Natural killer cell (primary cell): ENCODE measurements at regions of chr15 and their contacts with region 1.

Region 1: DNA sequence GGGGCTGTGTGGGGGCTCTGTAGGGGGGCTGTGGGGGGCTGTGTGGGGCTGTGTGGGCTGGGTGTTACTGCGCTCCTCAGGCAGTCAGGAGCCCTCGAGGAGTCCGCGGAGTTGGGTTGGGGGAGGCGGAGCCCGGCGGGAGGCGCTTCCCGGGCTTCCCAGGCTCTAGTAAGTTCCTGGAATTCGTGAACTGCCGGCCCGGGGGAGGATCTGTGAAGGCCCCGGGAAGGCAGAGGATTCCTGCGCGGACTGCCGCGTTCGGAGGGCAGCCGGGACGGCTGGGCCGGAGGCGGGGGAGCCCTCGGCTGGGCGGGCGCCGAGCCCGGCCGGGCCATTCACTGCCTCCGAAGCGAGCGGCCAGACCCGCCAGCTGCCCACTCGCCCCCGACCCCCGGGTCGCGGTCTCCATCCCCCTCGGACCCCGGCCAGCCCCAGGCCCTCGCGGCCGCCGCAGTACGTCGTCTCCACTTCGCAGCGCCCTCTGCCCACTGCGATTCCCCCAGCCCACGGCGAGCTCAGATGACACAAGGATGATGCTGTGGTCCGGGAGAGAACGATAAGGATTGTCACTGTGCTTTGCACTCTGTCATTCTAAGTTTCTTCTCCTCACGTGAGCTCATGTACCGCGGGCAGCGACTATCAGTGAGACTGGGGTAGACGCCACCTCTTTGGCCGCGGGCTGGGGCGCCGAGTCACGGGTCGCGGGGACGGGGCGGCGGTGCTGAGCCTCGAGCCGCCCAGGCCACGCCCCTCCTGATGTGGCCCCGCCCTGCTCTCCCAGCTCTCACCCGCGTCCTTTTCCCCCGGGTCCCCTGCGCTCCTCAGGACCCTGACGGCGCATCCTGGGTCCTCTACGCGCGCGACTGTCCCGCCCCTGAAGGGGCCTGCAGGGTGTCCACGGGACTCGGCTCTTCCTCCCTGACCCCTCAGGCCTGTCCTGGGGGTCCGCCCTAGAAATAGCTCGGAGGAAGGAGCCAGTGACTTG is 65.3 kb downstream of the KLF13 start:
- DNase-seq: peak; percentile 88 to 90
- ATAC-seq: peak; percentile 78 to 92 (median 84)
- H3K4me3 ChIP-seq: peak overlapping the region; percentile 93
- H3K4me3 Mint-ChIP-seq: peak overlapping the region; percentile 98
- H3K27ac ChIP-seq: peak overlapping the region; percentile 90
- H3K27ac Mint-ChIP-seq: peak overlapping the region; percentile 94
- H3K4me1 ChIP-seq: peaks cover 52% of the 10 kb centered on the region
- H3K4me1 Mint-ChIP-seq: peaks cover 57 to 79% of the 10 kb centered on the region in 2 donors
- H3K27me3 ChIP-seq: no peaks in the 10 kb centered on the region
- H3K27me3 Mint-ChIP-seq: no peaks in the 10 kb centered on the region
- CTCF ChIP-seq: no peak

Region 2: DNA sequence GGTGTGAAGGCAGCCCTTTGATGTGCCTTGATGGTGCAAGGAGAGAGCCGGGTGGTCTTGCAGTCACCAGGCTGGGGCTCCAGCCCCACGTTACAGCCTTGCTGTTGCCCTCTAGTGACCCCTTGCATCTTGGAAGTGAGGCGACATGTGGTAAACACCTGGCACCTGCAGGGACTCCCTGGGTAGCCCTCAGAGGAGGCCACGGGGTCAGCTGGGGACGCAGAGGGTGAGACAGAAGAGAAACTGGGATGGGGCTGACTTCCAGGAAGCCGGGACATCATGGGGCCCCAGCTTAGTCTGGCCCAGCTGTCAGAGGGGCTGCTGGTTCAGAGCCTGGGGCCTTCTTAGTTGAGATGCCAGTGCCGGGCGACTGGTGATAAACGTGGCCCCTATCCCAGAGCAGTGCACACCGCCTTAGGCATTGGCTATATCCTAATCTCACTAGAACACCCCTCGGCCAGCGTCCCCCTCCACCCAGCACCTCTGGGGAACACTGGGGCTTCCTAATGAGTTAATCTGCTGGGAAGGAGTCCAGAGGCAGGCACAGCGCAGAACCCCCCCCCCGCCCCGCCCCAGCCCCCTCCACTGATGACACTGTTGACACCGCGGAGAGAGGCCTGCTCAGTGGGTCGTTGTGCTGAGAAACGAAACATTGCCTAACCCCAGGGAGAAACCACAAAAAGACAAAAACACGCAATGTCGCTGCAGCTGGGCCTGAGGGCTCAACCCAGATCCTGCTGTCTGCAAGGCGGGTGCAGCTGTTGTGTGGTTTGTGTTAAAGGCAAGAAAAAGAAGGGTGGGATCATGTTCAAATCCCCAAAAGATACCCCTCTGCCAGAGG is 125.9 kb before region 1 on chr15:
- intact Hi-C with region 1: loop called (anchors 5 kb)
- DNase-seq: peak; percentile 47 to 88
- ATAC-seq: peak; percentile 74 to 83 (median 79)
- H3K4me3 ChIP-seq: no peak overlapping the region
- H3K4me3 Mint-ChIP-seq: peak overlapping the region; percentile 69
- H3K27ac ChIP-seq: peak overlapping the region; percentile 76
- H3K27ac Mint-ChIP-seq: peak overlapping the region; percentile 87 to 94
- H3K4me1 ChIP-seq: peaks cover 72% of the 10 kb centered on the region
- H3K4me1 Mint-ChIP-seq: peaks cover 58 to 78% of the 10 kb centered on the region in 2 donors
- H3K27me3 ChIP-seq: no peaks in the 10 kb centered on the region
- H3K27me3 Mint-ChIP-seq: no peaks in the 10 kb centered on the region
- CTCF ChIP-seq: no peak

Region 3: DNA sequence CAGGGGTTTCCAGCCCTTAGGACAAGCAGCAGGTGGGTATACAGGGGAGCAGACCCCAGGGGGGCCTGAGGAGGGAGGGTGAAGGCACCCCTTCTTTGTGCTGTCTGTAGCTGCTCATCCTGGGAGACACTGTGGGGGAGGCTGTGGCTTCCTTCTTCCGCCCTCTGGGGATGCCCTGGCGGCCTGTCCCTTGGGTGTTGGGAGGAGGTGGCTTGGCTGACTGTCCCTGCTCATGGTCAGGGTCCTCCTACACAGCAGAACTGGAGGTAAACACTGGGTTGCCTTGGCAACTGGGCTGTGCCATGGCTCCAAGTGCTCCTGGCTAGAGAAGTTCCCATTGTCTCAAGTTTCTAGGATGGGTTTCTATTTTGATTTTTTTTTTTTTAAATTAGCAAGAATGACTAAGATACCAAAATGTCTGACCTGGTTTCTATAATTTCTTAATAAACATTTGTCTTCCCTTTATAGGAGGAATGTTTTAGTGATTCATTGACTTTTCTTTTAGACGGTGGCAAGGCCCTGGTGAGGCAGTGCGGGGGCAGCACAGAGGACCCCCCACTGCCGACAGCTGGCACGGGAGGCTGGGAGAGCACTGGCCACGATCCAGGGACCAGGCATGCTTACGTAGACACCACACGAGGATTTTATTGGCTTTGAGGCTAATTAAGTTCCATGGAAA is 53.0 kb before region 1 on chr15:
- intact Hi-C with region 1: loop called (anchors 2 kb)
- DNase-seq: peak in 1 of 2 donors; percentile 55
- ATAC-seq: peak; percentile 32 to 48 (median 41)
- H3K4me3 ChIP-seq: no peak overlapping the region
- H3K4me3 Mint-ChIP-seq: peak overlapping the region; percentile 59
- H3K27ac ChIP-seq: peak overlapping the region; percentile 57
- H3K27ac Mint-ChIP-seq: peak overlapping the region; percentile 88 to 96
- H3K4me1 ChIP-seq: peaks cover 99% of the 10 kb centered on the region
- H3K4me1 Mint-ChIP-seq: peaks cover 90 to 100% of the 10 kb centered on the region in 2 donors
- H3K27me3 ChIP-seq: no peaks in the 10 kb centered on the region
- H3K27me3 Mint-ChIP-seq: no peaks in the 10 kb centered on the region
- CTCF ChIP-seq: no peak

Region 4: DNA sequence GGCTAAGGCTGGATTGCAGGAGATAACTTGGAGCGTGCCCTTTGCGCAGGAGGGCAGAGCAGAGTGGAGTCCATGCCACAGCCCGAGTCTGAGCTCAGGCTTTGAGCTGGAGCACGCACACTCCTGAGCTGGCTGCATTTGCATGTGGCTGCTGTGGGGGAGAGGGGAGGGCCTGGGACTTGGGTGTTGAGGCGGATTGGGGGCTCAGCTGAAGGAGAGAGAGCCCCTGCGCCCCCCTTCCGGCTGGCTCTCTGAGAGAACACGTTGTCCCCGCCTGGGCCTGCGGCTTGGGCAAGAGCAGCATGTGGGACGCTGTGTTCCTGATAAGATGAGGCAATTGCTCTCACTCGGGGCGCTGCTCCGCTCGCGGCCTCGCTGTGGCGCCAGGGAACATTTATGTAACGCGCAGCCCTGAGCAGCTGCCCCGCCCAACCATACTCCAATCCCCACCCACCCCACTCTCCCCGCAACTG is 26.3 kb before region 1 on chr15:
- intact Hi-C with region 1: loop called (anchors 2 kb)
- DNase-seq: peak; percentile 71 to 90
- ATAC-seq: peak; percentile 59 to 75 (median 63)
- H3K4me3 ChIP-seq: no peak overlapping the region
- H3K4me3 Mint-ChIP-seq: peak overlapping the region; percentile 88
- H3K27ac ChIP-seq: peak overlapping the region; percentile 87
- H3K27ac Mint-ChIP-seq: peak overlapping the region; percentile 88 to 96
- H3K4me1 ChIP-seq: peaks cover 98% of the 10 kb centered on the region
- H3K4me1 Mint-ChIP-seq: peaks cover 92 to 100% of the 10 kb centered on the region in 2 donors
- H3K27me3 ChIP-seq: no peaks in the 10 kb centered on the region
- H3K27me3 Mint-ChIP-seq: no peaks in the 10 kb centered on the region
- CTCF ChIP-seq: peak; percentile 51

Region 5: GRCh38 chr15:31472636-31473384 is 80.8 kb after region 1 on chr15:
- intact Hi-C with region 1: loop called (anchors 5 kb)
- DNase-seq: peak; percentile 34 to 76
- ATAC-seq: peak; percentile 90 to 98 (median 93)
- H3K4me3 ChIP-seq: peak overlapping the region; percentile 2
- H3K4me3 Mint-ChIP-seq: peak overlapping the region; percentile 84
- H3K27ac ChIP-seq: peak overlapping the region; percentile 72
- H3K27ac Mint-ChIP-seq: peak overlapping the region; percentile 73 to 84
- H3K4me1 ChIP-seq: peaks cover 33% of the 10 kb centered on the region
- H3K4me1 Mint-ChIP-seq: peaks cover 39 to 42% of the 10 kb centered on the region in 2 donors
- H3K27me3 ChIP-seq: no peaks in the 10 kb centered on the region
- H3K27me3 Mint-ChIP-seq: no peaks in the 10 kb centered on the region
- CTCF ChIP-seq: no peak

Region 6: GRCh38 chr15:31964586-31965307 is 572.8 kb after region 1 on chr15:
- intact Hi-C with region 1: no loop called
- DNase-seq: no peak
- ATAC-seq: no peak
- H3K4me3 ChIP-seq: no peak overlapping the region
- H3K4me3 Mint-ChIP-seq: no peak overlapping the region
- H3K27ac ChIP-seq: no peak overlapping the region
- H3K27ac Mint-ChIP-seq: no peak overlapping the region
- H3K4me1 ChIP-seq: no peaks in the 10 kb centered on the region
- H3K4me1 Mint-ChIP-seq: no peaks in the 10 kb centered on the region
- H3K27me3 ChIP-seq: no peaks in the 10 kb centered on the region
- H3K27me3 Mint-ChIP-seq: peaks cover 15 to 42% of the 10 kb centered on the region in 2 donors
- CTCF ChIP-seq: no peak